Cardiac septum (tissue), 1 donor: ENCODE measurements at regions of chr10 and their contacts with region 1.

Region 1: GRCh38 chr10:4241724-4242345 is 456.8 kb upstream of the KLF6 start:
- DNase-seq: no peak

Region 2: GRCh38 chr10:3805791-3806461 is 435.9 kb before region 1 on chr10:
- intact Hi-C with region 1: loop called (anchors 5 kb)
- DNase-seq: no peak

Region 3: GRCh38 chr10:4344511-4344994 is 102.7 kb after region 1 on chr10:
- intact Hi-C with region 1: loop called (anchors 2 kb)
- DNase-seq: peak; percentile 80

Region 4: DNA sequence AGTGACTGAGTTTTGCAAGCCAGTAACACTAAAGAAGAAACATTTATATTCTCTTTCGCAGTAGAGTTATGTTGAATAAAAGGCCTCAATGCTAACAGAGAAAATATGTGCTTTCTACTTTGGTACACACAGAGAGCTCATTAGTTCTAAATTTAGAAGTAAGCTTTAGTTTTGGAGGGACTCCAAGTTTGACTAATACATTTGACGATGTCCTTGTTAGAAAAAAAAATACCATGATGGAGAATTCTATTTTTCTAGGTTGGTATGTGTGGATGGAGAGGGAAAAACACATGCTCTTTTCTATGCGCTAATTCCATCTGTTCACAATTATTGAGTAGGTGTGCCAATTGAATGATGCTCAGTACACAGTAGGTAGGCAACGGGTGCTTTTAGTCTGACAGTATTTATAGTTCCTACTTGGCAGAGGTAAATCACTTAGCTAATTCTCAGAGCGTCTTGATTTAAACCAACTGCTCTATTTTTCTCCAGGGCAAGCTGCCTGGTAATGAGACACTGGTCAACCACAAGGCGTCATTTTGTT is 256.9 kb after region 1 on chr10:
- intact Hi-C with region 1: loop called (anchors 2 kb)
- DNase-seq: no peak